ENCODE measurements at regions of chr7 and their contacts with region 1.

Region 1: GRCh38 chr7:38451840-38452239 is 178.4 kb upstream of the TARP start:
- DNase-seq: peak; percentile 62
- ATAC-seq: peak; percentile 48
- H3K4me3 ChIP-seq: no peak overlapping the region
- H3K27ac ChIP-seq: no peak overlapping the region
- H3K4me1 ChIP-seq: no peaks in the 10 kb centered on the region
- H3K27me3 ChIP-seq: peaks cover 36% of the 10 kb centered on the region
- CTCF ChIP-seq: peak; percentile 57

Region 2: GRCh38 chr7:38660427-38661099 is 208.7 kb after region 1 on chr7:
- CTCF ChIA-PET with region 1: no interaction called
- POLR2A ChIA-PET with region 1: no interaction called
- intact Hi-C with region 1: loop called (anchors 1 kb)
- DNase-seq: peak; percentile 53
- ATAC-seq: peak; percentile 68
- H3K4me3 ChIP-seq: no peak overlapping the region
- H3K27ac ChIP-seq: no peak overlapping the region
- H3K4me1 ChIP-seq: no peaks in the 10 kb centered on the region
- H3K27me3 ChIP-seq: peaks cover 30% of the 10 kb centered on the region; the same call in 1 of the 2 replicates
- CTCF ChIP-seq: peak; percentile 73

Measured in PC-3 (cell line).